H1 (cell line): ENCODE measurements at regions of chr10 and their contacts with region 1.

Region 1: GRCh38 chr10:35442592-35442991 is 106.3 kb downstream of the CCNY start:
- DNase-seq: no peak
- H3K4me3 ChIP-seq: no peak overlapping the region
- H3K27ac ChIP-seq: no peak overlapping the region
- H3K4me1 ChIP-seq: peaks cover 0 to 1% (median 0%) of the 10 kb centered on the region in 4 experiments; a peak in 3 of 7 replicates
- H3K27me3 ChIP-seq: no peaks in the 10 kb centered on the region
- CTCF ChIP-seq: no peak
- EP300 ChIP-seq: no peak
- POLR2A ChIP-seq: no peak
- RAD21 ChIP-seq: no peak

Region 2: DNA sequence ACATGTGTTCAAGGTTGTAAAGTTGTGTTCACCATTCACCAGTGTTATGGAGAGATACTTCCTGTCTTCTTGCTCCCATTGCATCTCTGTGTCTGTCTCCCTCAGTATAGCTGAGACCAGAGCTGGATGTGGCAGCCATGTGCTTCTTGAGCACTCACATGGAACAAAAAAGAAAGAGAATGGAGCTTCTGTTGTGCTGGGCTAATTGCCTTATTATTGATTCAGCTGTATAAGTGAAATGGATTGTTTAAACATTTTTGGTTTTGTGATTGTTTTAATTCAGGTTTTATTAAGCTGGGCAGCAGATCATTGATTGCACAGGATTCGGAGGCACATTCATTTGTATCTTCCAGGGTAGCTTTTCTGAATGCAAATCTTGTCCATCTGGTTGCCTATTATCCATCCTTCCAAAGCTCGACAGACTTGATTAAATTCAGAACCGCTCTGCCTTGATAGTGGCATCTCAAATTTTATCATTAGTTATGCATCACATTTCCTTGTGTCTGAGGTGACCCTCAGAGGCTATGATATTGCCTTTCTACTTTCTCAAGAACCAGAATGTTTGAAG is 13.6 kb after region 1 on chr10:
- CTCF ChIA-PET with region 1: interaction called, 10 read pairs
- POLR2A ChIA-PET with region 1: no interaction called
- DNase-seq: no peak
- H3K4me3 ChIP-seq: no peak overlapping the region
- H3K27ac ChIP-seq: no peak overlapping the region
- H3K4me1 ChIP-seq: peaks cover 0 to 27% (median 15%) of the 10 kb centered on the region in 4 experiments; a peak in 6 of 7 replicates
- H3K27me3 ChIP-seq: no peaks in the 10 kb centered on the region
- CTCF ChIP-seq: no peak
- EP300 ChIP-seq: no peak
- POLR2A ChIP-seq: no peak
- RAD21 ChIP-seq: no peak

Region 3: DNA sequence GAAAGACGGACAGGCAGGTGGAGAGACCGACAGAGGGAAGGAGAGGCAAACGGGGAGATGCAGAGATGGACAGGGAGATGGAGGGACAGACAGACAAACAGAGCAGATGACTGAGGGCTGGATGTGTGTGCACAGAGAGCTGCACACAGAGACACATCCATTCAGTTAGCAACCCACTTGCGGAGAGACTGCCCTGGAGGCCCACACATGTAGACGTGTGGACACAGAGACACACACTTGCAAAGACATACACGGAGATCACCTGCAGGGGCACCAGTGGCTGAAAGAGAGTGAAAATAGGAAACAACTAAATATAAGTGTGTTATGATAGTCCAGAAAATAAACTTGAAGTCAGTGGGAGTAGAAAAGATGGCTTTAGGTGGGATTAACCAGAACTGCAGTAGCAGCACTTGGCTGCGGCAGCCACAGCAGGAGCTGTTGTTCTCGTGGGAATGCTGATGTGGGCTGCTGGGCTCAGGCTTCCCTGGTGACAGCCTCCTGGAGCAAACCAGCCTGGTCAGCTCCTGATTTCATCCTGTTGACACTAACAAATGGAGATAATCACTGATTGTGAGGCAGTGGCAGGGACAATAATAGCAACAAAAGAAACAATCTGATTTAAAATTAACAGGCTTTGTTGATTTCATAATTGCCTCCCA is 27.8 kb after region 1 on chr10:
- CTCF ChIA-PET with region 1: no interaction called
- POLR2A ChIA-PET with region 1: no interaction called
- DNase-seq: no peak
- H3K4me3 ChIP-seq: no peak overlapping the region; a peak in 2 of 8 replicates
- H3K27ac ChIP-seq: no peak overlapping the region
- H3K4me1 ChIP-seq: peaks cover 17 to 30% (median 25%) of the 10 kb centered on the region in 4 experiments
- H3K27me3 ChIP-seq: no peaks in the 10 kb centered on the region
- CTCF ChIP-seq: no peak
- EP300 ChIP-seq: no peak
- POLR2A ChIP-seq: no peak
- RAD21 ChIP-seq: no peak; a peak in 1 of 4 replicates

Region 4: DNA sequence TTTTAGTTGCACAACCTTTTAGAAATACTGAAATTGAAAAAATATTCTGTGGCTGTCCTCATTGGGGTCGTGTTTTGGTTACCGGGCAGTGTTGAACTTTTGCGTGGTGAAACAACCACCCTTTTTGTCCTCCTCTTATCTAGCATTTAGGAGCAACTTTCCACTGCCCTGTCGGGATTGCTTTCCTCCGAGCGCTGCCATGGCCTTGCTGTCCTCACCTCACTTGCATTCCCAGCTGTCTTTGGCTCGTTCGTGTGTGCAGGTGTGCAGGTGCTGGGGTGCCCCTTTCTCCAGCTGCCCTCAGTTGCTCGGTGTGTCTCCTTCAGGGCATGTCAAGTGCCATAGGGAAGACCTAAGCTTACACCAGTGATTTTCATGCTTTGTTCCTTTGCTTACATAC is 45.6 kb after region 1 on chr10:
- CTCF ChIA-PET with region 1: no interaction called
- POLR2A ChIA-PET with region 1: no interaction called
- DNase-seq: no peak
- H3K4me3 ChIP-seq: no peak overlapping the region
- H3K27ac ChIP-seq: no peak overlapping the region
- H3K4me1 ChIP-seq: peaks cover 1 to 9% (median 7%) of the 10 kb centered on the region in 4 experiments; a peak in 5 of 7 replicates
- H3K27me3 ChIP-seq: no peaks in the 10 kb centered on the region
- CTCF ChIP-seq: no peak
- EP300 ChIP-seq: no peak
- POLR2A ChIP-seq: no peak
- RAD21 ChIP-seq: no peak